Activated B cell treated with CpG ODN at 0.5 μM for 24 hours (primary cell): ENCODE measurements at regions of chr6 and their contacts with region 1.

Region 1: DNA sequence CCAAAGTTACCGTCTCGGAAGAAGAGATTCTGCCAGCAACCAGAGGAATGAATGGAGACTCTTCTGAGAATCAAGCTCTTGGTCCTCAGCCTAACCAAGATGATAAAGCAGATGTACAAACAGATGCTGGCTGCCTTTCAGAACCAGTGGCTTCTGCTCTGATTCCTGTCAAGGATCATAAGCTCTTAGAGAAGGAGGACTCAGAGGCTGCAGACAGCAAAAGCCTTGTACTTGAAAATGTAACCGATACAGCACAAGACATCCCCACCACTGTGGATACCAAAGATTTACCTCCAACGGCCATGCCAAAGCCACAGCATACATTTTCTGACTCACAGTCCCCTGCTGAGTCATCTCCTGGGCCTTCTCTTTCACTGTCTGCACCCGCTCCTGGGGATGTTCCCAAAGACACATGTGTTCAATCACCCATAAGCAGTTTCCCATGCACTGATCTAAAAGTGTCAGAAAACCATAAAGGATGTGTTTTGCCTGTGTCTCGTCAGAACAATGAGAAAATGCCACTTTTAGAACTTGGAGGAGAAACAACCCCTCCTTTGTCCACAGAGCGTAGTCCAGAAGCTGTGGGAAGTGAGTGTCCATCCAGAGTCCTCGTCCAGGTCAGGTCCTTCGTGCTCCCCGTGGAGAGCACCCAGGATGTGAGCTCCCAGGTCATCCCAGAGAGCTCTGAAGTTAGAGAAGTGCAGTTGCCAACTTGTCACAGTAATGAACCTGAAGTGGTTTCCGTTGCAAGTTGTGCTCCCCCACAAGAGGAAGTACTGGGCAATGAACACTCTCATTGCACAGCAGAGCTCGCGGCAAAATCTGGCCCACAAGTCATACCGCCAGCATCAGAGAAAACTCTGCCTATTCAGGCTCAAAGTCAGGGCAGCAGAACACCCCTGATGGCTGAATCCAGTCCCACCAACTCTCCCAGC is 109.6 kb downstream of the RTN4IP1 start:
- DNase-seq: peak; percentile 43
- ATAC-seq: peak; percentile 68
- H3K4me3 Mint-ChIP-seq: peak overlapping the region; percentile 86
- H3K27ac Mint-ChIP-seq: peak overlapping the region; percentile 97
- H3K4me1 Mint-ChIP-seq: peaks cover 85% of the 10 kb centered on the region
- H3K27me3 Mint-ChIP-seq: no peaks in the 10 kb centered on the region
- CTCF ChIP-seq: no peak

Region 2: GRCh38 chr6:105740946-105741645 is 778.6 kb before region 1 on chr6:
- CTCF ChIA-PET with region 1: no interaction called
- POLR2A ChIA-PET with region 1: no interaction called
- intact Hi-C with region 1: no loop called
- DNase-seq: no peak
- ATAC-seq: peak; percentile 52
- H3K4me3 Mint-ChIP-seq: no peak overlapping the region
- H3K27ac Mint-ChIP-seq: no peak overlapping the region
- H3K4me1 Mint-ChIP-seq: peaks cover 6% of the 10 kb centered on the region
- H3K27me3 Mint-ChIP-seq: peaks cover 14% of the 10 kb centered on the region
- CTCF ChIP-seq: no peak

Region 3: GRCh38 chr6:106097411-106098231 is 422.1 kb before region 1 on chr6:
- CTCF ChIA-PET with region 1: no interaction called
- POLR2A ChIA-PET with region 1: no interaction called
- intact Hi-C with region 1: loop called (anchors 5 kb)
- DNase-seq: no peak
- ATAC-seq: peak; percentile 74
- H3K4me3 Mint-ChIP-seq: peak overlapping the region; percentile 89
- H3K27ac Mint-ChIP-seq: peak overlapping the region; percentile 94
- H3K4me1 Mint-ChIP-seq: peaks cover 84% of the 10 kb centered on the region
- H3K27me3 Mint-ChIP-seq: no peaks in the 10 kb centered on the region
- CTCF ChIP-seq: no peak

Region 4: GRCh38 chr6:106534564-106534982 is 14.8 kb after region 1 on chr6:
- CTCF ChIA-PET with region 1: interaction called, 6 read pairs
- POLR2A ChIA-PET with region 1: interaction called, 27 read pairs
- intact Hi-C with region 1: loop called (anchors 2 kb)
- DNase-seq: no peak
- ATAC-seq: peak; percentile 23
- H3K4me3 Mint-ChIP-seq: peak overlapping the region; percentile 19
- H3K27ac Mint-ChIP-seq: peak overlapping the region; percentile 82
- H3K4me1 Mint-ChIP-seq: peaks cover 79% of the 10 kb centered on the region
- H3K27me3 Mint-ChIP-seq: no peaks in the 10 kb centered on the region
- CTCF ChIP-seq: no peak

Region 5: GRCh38 chr6:106539936-106540335 is 20.2 kb after region 1 on chr6:
- CTCF ChIA-PET with region 1: interaction called, 6 read pairs
- POLR2A ChIA-PET with region 1: interaction called, 27 read pairs
- intact Hi-C with region 1: loop called (anchors 2 kb)
- DNase-seq: no peak
- ATAC-seq: no peak
- H3K4me3 Mint-ChIP-seq: peak overlapping the region; percentile 37
- H3K27ac Mint-ChIP-seq: peak overlapping the region; percentile 80
- H3K4me1 Mint-ChIP-seq: peaks cover 58% of the 10 kb centered on the region
- H3K27me3 Mint-ChIP-seq: no peaks in the 10 kb centered on the region
- CTCF ChIP-seq: no peak

Region 6: GRCh38 chr6:106546691-106547414 is 27.1 kb after region 1 on chr6:
- CTCF ChIA-PET with region 1: interaction called, 89 read pairs
- POLR2A ChIA-PET with region 1: interaction called, 51 read pairs
- intact Hi-C with region 1: loop called (anchors 1 kb)
- DNase-seq: no peak
- ATAC-seq: peak; percentile 81
- H3K4me3 Mint-ChIP-seq: peak overlapping the region; percentile 70
- H3K27ac Mint-ChIP-seq: peak overlapping the region; percentile 98
- H3K4me1 Mint-ChIP-seq: peaks cover 49% of the 10 kb centered on the region
- H3K27me3 Mint-ChIP-seq: no peaks in the 10 kb centered on the region
- CTCF ChIP-seq: no peak

Region 7: DNA sequence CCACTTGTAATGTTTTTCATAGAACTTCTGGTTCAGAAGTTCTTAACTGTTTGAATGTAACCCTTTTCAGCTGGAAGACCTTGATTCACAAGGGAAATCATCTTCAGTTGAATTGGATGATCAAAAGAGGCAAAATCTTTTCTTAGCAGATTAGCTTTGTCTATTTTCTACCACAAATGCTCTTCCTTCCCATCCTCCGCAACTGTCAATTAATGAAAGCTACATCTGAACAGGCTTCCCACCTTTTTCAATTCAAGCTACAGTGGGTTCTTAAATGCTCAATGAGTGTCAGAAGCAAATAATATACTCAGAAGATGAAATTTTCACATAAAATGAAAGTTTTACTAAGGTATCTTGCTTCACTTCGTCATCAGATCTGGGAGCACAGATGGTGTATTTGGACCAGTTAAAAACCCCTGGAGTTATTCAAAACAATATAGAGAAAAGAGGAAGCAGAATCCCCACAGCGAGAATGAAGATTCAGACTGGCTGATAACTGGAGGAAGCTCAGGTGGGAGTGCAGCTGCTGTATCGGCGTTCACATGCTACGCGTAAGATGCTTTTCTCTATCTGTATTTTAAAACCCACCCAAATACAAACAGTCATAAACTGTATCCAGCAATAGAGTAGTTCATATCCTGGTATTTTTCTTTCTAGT is 129.1 kb after region 1 on chr6:
- CTCF ChIA-PET with region 1: no interaction called
- POLR2A ChIA-PET with region 1: interaction called, 10 read pairs
- intact Hi-C with region 1: no loop called
- DNase-seq: no peak
- ATAC-seq: peak; percentile 96
- H3K4me3 Mint-ChIP-seq: peak overlapping the region; percentile 84
- H3K27ac Mint-ChIP-seq: peak overlapping the region; percentile 96
- H3K4me1 Mint-ChIP-seq: peaks cover 48% of the 10 kb centered on the region
- H3K27me3 Mint-ChIP-seq: no peaks in the 10 kb centered on the region
- CTCF ChIP-seq: no peak

Region 8: DNA sequence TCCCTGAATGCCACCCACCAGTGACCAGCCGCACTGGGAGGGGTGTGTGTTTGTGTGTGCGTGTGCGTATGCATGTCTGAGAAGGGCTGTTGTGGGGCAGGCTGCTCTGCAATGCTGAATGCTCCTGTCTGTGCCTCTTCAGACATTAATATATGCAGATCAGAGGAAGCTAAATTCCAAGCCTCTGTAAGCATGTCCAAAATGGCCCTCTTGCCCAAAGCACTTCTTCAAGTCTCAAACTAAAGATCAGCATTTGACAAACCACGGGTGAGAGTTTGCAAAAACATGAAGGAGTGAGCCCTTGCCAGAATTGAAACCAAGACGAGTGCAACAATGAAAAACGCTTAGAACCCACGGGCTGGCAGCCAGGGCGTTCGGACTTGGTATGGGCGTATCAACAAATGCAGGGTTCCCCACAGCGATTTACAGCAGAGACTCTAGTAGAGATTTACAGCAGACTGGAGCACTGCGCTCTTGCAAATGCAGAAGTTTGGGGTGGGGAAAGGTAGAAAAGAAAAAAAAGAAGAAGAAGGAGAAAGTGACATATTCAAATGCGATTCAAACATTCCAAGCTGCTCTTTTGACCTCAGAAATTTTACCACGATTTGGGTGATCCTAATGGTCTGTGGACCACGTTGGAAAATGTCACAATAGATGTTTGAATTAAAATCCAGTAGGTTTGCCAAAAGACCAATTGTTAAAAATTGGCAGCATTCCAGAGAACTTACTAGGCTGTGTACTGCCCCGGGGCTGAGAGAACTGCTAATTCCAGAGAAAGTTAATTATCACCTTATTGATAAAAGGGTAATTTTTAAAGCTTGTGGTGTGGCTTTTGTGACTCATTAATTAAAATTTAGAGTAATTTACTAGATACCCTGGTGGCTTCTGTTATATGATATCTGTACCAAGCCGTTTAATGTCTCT is 1300.9 kb after region 1 on chr6:
- CTCF ChIA-PET with region 1: no interaction called
- POLR2A ChIA-PET with region 1: no interaction called
- intact Hi-C with region 1: loop called (anchors 10 kb)
- DNase-seq: no peak
- ATAC-seq: peak; percentile 23
- H3K4me3 Mint-ChIP-seq: peak overlapping the region; percentile 86
- H3K27ac Mint-ChIP-seq: peak overlapping the region; percentile 85
- H3K4me1 Mint-ChIP-seq: peaks cover 74% of the 10 kb centered on the region
- H3K27me3 Mint-ChIP-seq: no peaks in the 10 kb centered on the region
- CTCF ChIP-seq: no peak